ENCODE measurements at regions of chr17 and their contacts with region 1.

Region 1: GRCh38 chr17:39927101-39927928 is at the starts of genes LRRC3C and ORMDL3:
- DNase-seq: peak; percentile 86 to 95 (median 92)
- ATAC-seq: peak; percentile 92
- H3K4me3 ChIP-seq: peak within 1 kb of the TSS; percentile 82
- H3K4me3 Mint-ChIP-seq: peak within 1 kb of the TSS; percentile 90 to 98 (median 92)
- H3K27ac ChIP-seq: peak within 1 kb of the TSS; percentile 87
- H3K27ac Mint-ChIP-seq: peak within 1 kb of the TSS; percentile 85 to 97 (median 93)
- H3K4me1 ChIP-seq: peaks cover 49 to 50% of the 10 kb centered on the region in 2 donors
- H3K4me1 Mint-ChIP-seq: peaks cover 20 to 59% (median 46%) of the 10 kb centered on the region in 7 donors
- H3K27me3 ChIP-seq: no peaks in the 10 kb centered on the region
- H3K27me3 Mint-ChIP-seq: no peaks in the 10 kb centered on the region
- total RNA-seq, gene LRRC3C: 0.27 TPM in 1 of 5 experiments, not detected in the others
- total RNA-seq, gene ORMDL3: 77.6 to 205 (median 110) TPM

Region 2: DNA sequence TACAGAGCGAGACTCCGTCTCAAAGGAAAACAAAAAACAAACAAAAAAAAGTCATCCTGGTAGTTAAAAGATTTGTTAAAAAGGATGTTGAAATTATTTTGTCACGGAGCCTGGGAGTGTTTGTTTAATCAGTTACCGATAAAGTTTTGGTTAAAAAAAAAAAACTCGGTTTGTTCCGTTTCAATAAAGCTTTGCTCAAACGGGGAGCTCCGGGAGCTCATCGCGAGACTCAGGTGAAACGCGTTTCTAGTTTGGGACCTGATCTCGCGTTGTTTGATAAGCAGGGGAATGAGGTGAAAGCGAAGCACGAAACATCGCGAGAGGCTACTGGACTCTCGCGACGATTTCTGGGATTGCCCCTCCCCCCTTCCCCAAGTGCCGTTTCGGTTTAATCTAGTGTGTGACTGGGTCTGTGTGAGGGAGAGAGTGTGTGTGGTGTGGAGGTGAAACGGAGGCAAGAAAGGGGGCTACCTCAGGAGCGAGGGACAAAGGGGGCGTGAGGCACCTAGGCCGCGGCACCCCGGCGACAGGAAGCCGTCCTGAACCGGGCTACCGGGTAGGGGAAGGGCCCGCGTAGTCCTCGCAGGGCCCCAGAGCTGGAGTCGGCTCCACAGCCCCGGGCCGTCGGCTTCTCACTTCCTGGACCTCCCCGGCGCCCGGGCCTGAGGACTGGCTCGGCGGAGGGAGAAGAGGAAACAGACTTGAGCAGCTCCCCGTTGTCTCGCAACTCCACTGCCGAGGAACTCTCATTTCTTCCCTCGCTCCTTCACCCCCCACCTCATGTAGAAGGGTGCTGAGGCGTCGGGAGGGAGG is 466.0 kb before region 1 on chr17 and contains the start of gene CDK12:
- CTCF ChIA-PET with region 1: no interaction called
- POLR2A ChIA-PET with region 1: no interaction called
- intact Hi-C with region 1: loop called in 1 of 2 experiments (anchors 1 kb)
- DNase-seq: peak; percentile 76 to 98 (median 95)
- ATAC-seq: peak; percentile 91
- H3K4me3 ChIP-seq: peak within 1 kb of the TSS; percentile 73
- H3K4me3 Mint-ChIP-seq: peak within 1 kb of the TSS; percentile 93 to 100 (median 98)
- H3K27ac ChIP-seq: peak within 1 kb of the TSS; percentile 89
- H3K27ac Mint-ChIP-seq: peak within 1 kb of the TSS; percentile 89 to 99 (median 97)
- H3K4me1 ChIP-seq: peaks cover 8 to 13% of the 10 kb centered on the region in 2 donors
- H3K4me1 Mint-ChIP-seq: peaks cover 27 to 51% (median 41%) of the 10 kb centered on the region in 7 donors
- H3K27me3 ChIP-seq: no peaks in the 10 kb centered on the region
- H3K27me3 Mint-ChIP-seq: no peaks in the 10 kb centered on the region
- total RNA-seq, gene CDK12: 94.9 to 118 (median 112) TPM

Region 3: DNA sequence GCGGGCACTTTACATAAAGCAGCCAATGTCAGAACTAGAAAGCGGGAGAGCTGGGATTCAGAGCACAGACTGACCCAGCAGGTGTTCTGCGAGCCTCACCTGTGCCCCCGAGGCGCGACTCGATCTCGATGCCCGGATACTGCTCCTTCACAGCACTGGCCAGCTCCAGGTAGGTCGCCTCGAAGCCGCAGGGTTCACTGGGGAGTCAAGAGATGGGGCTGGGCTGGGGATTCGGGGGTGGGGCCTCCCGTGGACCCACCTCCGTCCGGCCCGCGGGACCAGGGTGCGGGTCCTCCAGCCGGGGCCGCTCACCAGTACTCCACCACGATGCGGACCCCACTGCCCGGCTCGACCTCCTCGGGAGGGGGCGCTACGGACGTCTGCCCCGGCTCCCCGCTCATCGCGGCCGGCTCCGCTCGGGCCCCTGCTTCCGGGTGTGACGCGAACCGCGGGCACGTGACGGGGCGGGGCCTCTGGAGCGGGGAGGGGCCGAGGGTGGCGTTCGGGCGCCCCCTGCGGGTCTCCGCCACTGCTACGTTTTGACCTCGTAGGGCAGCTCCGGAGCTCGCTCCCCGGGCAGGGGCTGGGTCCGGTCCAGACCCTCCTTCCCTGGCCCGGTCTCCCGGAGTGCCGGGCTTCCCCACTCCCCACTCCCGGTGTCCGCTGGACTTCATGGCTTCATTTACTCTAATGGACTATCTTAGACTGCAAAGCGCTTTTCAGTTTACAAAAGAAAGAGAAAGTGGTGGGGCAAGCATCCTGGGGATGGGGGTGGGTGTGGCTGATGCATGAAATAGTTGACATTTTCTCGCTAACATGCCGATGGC is 197.0 kb before region 1 on chr17 and contains the start of gene MIEN1:
- CTCF ChIA-PET with region 1: no interaction called
- POLR2A ChIA-PET with region 1: interaction called, 6 read pairs
- intact Hi-C with region 1: loop called in 1 of 2 experiments (anchors 1 kb)
- DNase-seq: peak; percentile 87 to 100 (median 95)
- ATAC-seq: peak; percentile 98
- H3K4me3 ChIP-seq: peak within 1 kb of the TSS; percentile 95
- H3K4me3 Mint-ChIP-seq: peak within 1 kb of the TSS; percentile 88 to 96 (median 92)
- H3K27ac ChIP-seq: peak within 1 kb of the TSS; percentile 95
- H3K27ac Mint-ChIP-seq: peak within 1 kb of the TSS; percentile 84 to 98 (median 94)
- H3K4me1 ChIP-seq: peaks cover 10% of the 10 kb centered on the region in 2 donors
- H3K4me1 Mint-ChIP-seq: peaks cover 11 to 20% (median 16%) of the 10 kb centered on the region in 7 donors
- H3K27me3 ChIP-seq: no peaks in the 10 kb centered on the region
- H3K27me3 Mint-ChIP-seq: peaks cover 0 to 7% (median 0%) of the 10 kb centered on the region in 5 donors
- total RNA-seq, gene MIEN1: 28.7 to 40.1 (median 32.3) TPM

Region 4: DNA sequence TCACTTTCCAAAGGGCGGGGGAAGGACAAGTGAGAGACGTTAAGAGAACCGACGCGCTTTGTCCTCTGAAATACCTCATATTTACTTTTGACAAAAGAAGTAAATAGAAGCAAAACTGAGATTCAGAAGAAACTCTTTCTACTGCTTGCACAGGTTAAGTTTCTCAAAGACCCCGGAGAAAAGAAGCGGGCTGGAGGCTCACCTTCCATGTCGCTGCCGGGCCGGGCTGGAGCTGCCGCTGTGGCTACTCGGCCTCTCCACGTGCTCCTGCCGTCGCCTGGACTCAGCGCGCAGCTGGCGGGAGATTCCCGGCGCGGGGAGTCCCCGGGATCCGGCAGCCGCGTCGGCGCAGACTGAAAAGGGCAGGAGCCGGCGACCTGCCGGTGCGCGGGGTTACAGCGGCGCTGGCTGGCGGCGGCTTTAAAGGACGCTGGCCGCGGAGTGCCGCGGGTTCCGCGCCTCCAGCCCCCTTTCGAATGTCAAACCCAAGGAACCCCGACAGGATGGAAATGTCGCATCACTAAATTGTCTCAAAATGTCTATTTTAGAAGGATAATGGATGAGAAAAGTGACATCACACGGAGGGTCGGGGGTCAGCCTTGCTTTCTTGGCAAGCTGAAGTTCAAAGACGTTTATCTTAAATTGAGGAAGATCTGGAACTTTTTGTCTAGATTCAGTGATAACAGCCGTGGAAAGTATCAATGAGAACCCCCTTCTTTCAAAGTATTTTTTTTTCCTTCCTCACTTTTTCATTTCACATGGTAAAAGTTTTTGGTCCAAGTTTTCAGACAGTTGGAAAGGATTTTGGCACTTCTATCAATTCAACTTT is 63.2 kb before region 1 on chr17 and contains the start of gene IKZF3:
- CTCF ChIA-PET with region 1: interaction called, 4 read pairs
- POLR2A ChIA-PET with region 1: interaction called, 10 read pairs
- intact Hi-C with region 1: loop called in 1 of 2 experiments (anchors 2 kb)
- DNase-seq: peak; percentile 69 to 87 (median 76)
- ATAC-seq: peak; percentile 89
- H3K4me3 ChIP-seq: peak within 1 kb of the TSS; percentile 69
- H3K4me3 Mint-ChIP-seq: peak within 1 kb of the TSS; percentile 86 to 98 (median 94)
- H3K27ac ChIP-seq: peak within 1 kb of the TSS; percentile 99
- H3K27ac Mint-ChIP-seq: peak within 1 kb of the TSS; percentile 86 to 98 (median 97)
- H3K4me1 ChIP-seq: peaks cover 27 to 33% of the 10 kb centered on the region in 2 donors
- H3K4me1 Mint-ChIP-seq: peaks cover 22 to 88% (median 68%) of the 10 kb centered on the region in 7 donors
- H3K27me3 ChIP-seq: no peaks in the 10 kb centered on the region
- H3K27me3 Mint-ChIP-seq: no peaks in the 10 kb centered on the region
- total RNA-seq, gene IKZF3: 26.1 to 77.8 (median 61.1) TPM

Region 5: DNA sequence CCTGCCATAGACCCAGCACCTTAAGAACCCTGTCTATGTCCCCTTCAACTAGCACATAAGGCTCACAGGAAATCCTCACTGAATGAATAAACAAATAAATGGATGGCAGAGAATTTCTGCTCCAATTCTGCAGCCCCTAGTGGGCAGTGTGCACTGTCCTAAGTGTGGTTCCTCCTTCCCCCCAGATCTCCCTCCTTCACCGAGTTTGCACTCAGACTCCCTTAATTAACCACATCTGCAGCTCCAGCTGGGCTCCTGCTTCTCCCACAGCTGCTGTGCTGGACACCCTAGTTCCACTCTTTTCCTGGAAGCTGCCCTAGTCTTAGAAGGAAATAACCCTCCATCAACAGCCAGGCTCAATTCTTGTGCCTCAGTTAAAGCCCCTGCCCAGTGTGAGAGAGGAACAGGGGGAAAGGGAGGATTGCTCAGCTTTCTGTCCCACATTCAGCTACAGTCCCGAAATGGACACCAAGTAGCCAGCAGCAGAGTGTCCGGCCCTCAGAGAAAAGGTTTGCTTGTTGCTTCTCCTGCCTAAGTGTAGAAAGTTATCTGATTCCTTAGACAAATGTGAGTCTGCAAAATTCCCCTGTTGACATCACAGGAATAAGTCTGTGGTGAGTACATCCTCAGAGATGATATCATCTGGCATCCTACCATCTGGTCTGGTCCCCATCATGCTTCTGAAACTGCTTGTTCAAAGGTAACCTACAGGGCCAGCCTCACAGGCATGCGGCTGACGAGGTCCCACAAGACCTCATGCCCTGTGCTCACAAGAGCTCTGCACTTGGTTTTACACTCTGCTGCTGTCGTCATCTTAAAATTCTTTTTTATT is 12.5 kb after region 1 on chr17:
- CTCF ChIA-PET with region 1: no interaction called
- POLR2A ChIA-PET with region 1: interaction called, 3 read pairs
- intact Hi-C with region 1: loop called in 1 of 2 experiments (anchors 1 kb)
- DNase-seq: peak in 6 of 9 donors; percentile 21 to 80 (median 61)
- ATAC-seq: peak; percentile 87
- H3K4me3 ChIP-seq: no peak overlapping the region
- H3K4me3 Mint-ChIP-seq: peak overlapping the region in 1 of 10 donors; percentile 69
- H3K27ac ChIP-seq: no peak overlapping the region
- H3K27ac Mint-ChIP-seq: peak overlapping the region in 5 of 9 donors; percentile 10 to 94 (median 86)
- H3K4me1 ChIP-seq: peaks cover 4 to 7% of the 10 kb centered on the region in 2 donors
- H3K4me1 Mint-ChIP-seq: peaks cover 5 to 23% (median 12%) of the 10 kb centered on the region in 7 donors
- H3K27me3 ChIP-seq: no peaks in the 10 kb centered on the region
- H3K27me3 Mint-ChIP-seq: peaks cover 0 to 3% (median 0%) of the 10 kb centered on the region in 5 donors

Region 6: GRCh38 chr17:39980351-39981206 is 53.3 kb after region 1 on chr17 and contains the start of gene PSMD3:
- CTCF ChIA-PET with region 1: interaction called, 7 read pairs
- POLR2A ChIA-PET with region 1: interaction called, 14 read pairs
- intact Hi-C with region 1: loop called (anchors 1 kb)
- DNase-seq: peak; percentile 86 to 99 (median 98)
- ATAC-seq: peak; percentile 97
- H3K4me3 ChIP-seq: peak within 1 kb of the TSS; percentile 63
- H3K4me3 Mint-ChIP-seq: peak within 1 kb of the TSS; percentile 89 to 97 (median 94)
- H3K27ac ChIP-seq: peak within 1 kb of the TSS; percentile 91
- H3K27ac Mint-ChIP-seq: peak within 1 kb of the TSS; percentile 89 to 96 (median 93)
- H3K4me1 ChIP-seq: peaks cover 17 to 23% of the 10 kb centered on the region in 2 donors
- H3K4me1 Mint-ChIP-seq: peaks cover 24 to 50% (median 46%) of the 10 kb centered on the region in 7 donors
- H3K27me3 ChIP-seq: no peaks in the 10 kb centered on the region
- H3K27me3 Mint-ChIP-seq: peaks cover 0 to 13% (median 0%) of the 10 kb centered on the region in 5 donors
- total RNA-seq, gene PSMD3: 55.7 to 111 (median 68.9) TPM

Measured in naive thymus-derived CD4-positive, alpha-beta T cell (primary cell).